K562 (cell line): ENCODE measurements at regions of chr1 and their contacts with region 1.

Region 1: DNA sequence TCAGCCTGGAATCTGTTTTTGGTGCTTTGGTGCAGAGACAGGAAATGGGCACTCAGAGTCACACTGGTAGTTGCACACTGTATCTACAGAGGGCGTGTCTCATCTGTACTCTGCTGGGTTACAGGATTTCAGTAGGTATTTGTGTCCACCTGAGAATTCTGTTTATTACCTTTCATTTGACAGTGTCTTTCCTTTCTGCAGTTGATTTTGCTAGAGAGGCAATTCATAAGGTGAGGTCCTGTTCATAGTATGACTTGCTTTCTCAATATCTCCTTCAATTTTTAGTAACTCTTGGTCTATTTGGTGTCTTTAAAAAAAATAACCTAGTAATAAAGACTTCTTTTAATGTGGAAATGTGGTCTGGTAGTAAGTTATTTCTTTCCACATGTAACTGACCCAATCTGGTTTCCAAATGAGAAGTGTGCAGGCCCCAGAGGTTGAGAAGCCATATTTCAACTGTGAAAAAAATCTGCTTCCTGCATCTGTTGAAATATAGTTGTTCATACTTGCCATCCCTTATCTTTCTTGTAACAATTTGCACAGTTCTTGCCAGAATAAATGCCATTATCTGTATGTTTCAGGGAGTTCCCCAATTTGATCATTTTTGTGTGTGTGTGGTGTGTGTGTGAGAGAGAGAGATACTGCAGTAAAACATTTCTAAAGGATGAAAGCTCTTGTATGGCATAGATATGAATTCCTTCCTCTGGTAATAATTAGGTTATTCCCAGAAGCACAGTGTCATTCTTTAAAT is 78.4 kb upstream of the DNAJC6 start:
- DNase-seq: peak; percentile 34 to 88 (median 46)
- ATAC-seq: peak; percentile 61
- H3K4me3 ChIP-seq: no peak overlapping the region
- H3K27ac ChIP-seq: peak overlapping the region; percentile 86
- H3K4me1 ChIP-seq: peaks cover 40 to 66% of the 10 kb centered on the region in 2 experiments
- H3K27me3 ChIP-seq: no peaks in the 10 kb centered on the region
- CTCF ChIP-seq: peak in 2 of 3 experiments; percentile 18 to 22; a peak in 1 of 6 replicates
- EP300 ChIP-seq: peak; percentile 98
- POLR2A ChIP-seq: no peak
- RAD21 ChIP-seq: peak; percentile 5; a peak in 1 of 4 replicates

Region 2: DNA sequence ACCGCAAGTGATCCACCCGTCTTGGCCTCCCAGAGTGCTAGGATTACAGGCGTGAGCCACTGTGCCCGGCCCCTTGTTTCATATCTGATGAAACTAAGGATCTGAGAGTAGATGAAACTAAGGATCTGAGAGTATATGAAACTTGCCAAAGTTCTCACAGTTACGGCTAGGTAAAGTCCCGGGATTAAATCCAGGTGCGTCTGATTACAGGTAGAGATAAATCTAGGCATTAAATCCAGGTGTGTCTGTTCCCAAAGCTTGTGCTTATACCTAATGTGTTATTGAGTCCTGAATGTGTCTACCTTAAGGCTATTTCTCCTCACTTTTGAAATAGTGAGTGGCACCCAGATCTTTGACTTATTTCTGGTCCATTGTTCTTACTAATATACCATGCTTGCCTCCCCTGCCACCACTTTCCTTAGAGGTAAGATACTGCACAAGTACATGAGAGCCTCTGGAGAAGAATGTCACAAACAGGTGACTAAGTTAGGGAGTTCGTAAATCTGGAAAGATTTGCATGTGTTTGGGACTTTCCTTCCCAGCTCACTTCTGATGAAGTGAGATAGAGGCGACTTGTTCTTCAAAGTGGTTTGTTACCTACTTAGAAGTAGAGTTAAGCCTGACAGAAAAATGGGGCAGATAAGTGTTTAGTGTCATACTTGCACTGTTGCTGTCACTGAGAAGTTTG is 16.4 kb before region 1 on chr1:
- CTCF ChIA-PET with region 1: no interaction called
- POLR2A ChIA-PET with region 1: interaction called, 4 read pairs
- in situ Hi-C with region 1: no loop called
- intact Hi-C with region 1: loop called (anchors 1 kb)
- DNase-seq: no peak
- ATAC-seq: no peak; the same call in 1 of the 3 replicates
- H3K4me3 ChIP-seq: no peak overlapping the region
- H3K27ac ChIP-seq: no peak overlapping the region
- H3K4me1 ChIP-seq: peaks cover 5 to 19% of the 10 kb centered on the region in 2 experiments; a peak in 3 of 5 replicates
- H3K27me3 ChIP-seq: no peaks in the 10 kb centered on the region
- CTCF ChIP-seq: no peak
- EP300 ChIP-seq: no peak
- POLR2A ChIP-seq: no peak
- RAD21 ChIP-seq: no peak

Region 3: DNA sequence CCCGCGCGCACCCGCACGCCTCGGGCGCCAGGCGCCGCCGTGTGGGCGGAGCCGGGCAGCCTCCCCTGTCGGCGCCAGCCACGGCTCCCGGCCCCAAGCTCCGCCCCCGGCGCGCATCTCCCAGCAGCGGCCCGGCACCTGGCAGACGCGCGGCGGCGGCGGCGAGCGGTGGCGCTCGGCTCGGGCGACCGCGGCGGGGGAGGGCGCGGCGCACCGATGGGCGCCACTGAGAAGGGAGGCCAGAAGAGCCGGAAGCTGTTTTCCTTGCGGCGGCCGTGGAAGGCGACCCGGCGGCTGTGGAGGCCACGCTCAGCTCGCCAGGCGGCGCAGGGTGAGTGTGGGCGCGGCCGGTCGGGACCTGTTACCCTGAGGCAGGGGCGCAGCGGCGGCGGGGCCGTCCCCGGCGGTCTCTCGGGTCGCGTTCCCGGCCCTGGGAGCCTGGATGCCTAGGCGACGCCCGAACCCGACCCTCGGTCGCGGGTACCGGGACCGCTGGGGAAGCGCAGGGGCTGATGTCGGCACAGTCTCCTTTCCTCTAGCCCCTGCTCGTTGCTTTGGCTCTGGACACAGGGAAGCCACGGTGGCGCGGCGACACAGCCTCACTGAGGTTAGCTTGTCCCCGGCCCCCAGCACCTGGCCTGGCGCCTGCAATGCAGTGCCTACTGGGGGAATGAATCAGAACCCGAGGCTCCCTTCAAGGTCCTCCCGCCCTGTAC is 23.6 kb after region 1 on chr1:
- CTCF ChIA-PET with region 1: no interaction called
- POLR2A ChIA-PET with region 1: interaction called, 5 read pairs
- in situ Hi-C with region 1: no loop called
- intact Hi-C with region 1: loop called (anchors 2 kb)
- DNase-seq: peak; percentile 93 to 96 (median 94)
- ATAC-seq: peak; percentile 90
- H3K4me3 ChIP-seq: peak overlapping the region; percentile 68
- H3K27ac ChIP-seq: peak overlapping the region; percentile 83
- H3K4me1 ChIP-seq: peaks cover 19 to 23% of the 10 kb centered on the region in 2 experiments
- H3K27me3 ChIP-seq: no peaks in the 10 kb centered on the region
- CTCF ChIP-seq: peak in 2 of 3 experiments; percentile 18 to 29; a peak in 3 of 6 replicates
- EP300 ChIP-seq: no peak; the same call in 1 of the 2 replicates
- POLR2A ChIP-seq: no peak; the same call in 1 of the 2 replicates
- RAD21 ChIP-seq: peak; percentile 37 to 51; a peak in 2 of 4 replicates

Region 4: GRCh38 chr1:65478379-65479026 is 247.6 kb after region 1 on chr1:
- CTCF ChIA-PET with region 1: no interaction called
- POLR2A ChIA-PET with region 1: interaction called, 3 read pairs
- in situ Hi-C with region 1: no loop called
- intact Hi-C with region 1: loop called (anchors 1 kb)
- DNase-seq: no peak
- ATAC-seq: 0 out of 3 replicates have a peak, but pooled peaks have one; percentile 2
- H3K4me3 ChIP-seq: peak overlapping the region; percentile 57
- H3K27ac ChIP-seq: peak overlapping the region; percentile 77
- H3K4me1 ChIP-seq: peaks cover 7 to 21% of the 10 kb centered on the region in 2 experiments; a peak in 3 of 5 replicates
- H3K27me3 ChIP-seq: no peaks in the 10 kb centered on the region
- CTCF ChIP-seq: no peak
- EP300 ChIP-seq: no peak
- POLR2A ChIP-seq: 0 out of 2 replicates have a peak, but pooled peaks have one; percentile 23
- RAD21 ChIP-seq: no peak